Activated CD4-positive, alpha-beta memory T cell treated with anti-CD3 and anti-CD28 coated beads for 36 hours (primary cell): ENCODE measurements at regions of chr20 and their contacts with region 1.

Region 1: DNA sequence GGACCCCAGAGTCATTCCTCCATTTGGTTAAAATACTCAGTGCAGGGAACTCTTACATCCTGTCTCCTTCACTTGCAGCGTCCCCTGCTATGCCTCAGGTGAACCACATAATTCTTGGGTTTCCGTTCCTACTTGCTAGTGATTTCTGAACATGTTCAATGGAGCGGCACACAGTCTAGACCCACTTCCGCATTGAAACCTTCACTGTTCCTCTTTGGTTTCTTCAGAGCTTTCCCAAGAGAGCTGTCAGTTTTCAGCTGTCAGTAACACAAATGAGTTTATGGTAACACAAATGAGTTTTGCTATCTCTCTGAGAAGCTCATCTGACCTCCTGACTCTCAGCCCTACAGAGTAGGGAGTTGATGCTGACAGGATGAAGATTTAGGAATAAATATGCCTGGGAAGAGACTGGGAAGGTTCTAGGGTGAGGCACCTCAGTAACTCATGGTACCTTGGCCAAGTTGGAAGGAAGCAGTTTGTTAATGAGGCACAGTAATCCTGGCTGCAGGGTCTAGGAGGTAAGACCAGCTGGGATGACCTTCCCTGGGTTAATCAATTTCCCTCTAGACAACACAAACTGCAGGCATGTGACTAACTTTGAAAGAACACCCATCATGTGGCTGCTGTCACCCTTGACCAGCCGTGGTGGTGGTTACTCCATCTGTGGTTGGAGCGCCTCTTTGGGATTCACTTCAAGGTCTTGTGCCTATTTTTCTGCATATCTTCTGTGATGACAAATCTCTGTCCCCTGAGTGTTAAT is 5.4 kb downstream of the SYS1 start:
- DNase-seq: peak; percentile 66
- H3K4me3 Mint-ChIP-seq: no peak overlapping the region
- H3K27ac Mint-ChIP-seq: peak overlapping the region; percentile 44
- H3K4me1 Mint-ChIP-seq: peaks cover 59% of the 10 kb centered on the region
- H3K27me3 Mint-ChIP-seq: no peaks in the 10 kb centered on the region

Region 2: GRCh38 chr20:45450097-45450818 is 81.9 kb after region 1 on chr20:
- CTCF ChIA-PET with region 1: interaction called, 69 read pairs
- POLR2A ChIA-PET with region 1: no interaction called
- intact Hi-C with region 1: no loop called
- DNase-seq: no peak
- H3K4me3 Mint-ChIP-seq: no peak overlapping the region
- H3K27ac Mint-ChIP-seq: no peak overlapping the region
- H3K4me1 Mint-ChIP-seq: no peaks in the 10 kb centered on the region
- H3K27me3 Mint-ChIP-seq: peaks cover 3% of the 10 kb centered on the region

Region 3: GRCh38 chr20:45538209-45538799 is 169.9 kb after region 1 on chr20:
- CTCF ChIA-PET with region 1: no interaction called
- POLR2A ChIA-PET with region 1: no interaction called
- intact Hi-C with region 1: no loop called
- DNase-seq: no peak
- H3K4me3 Mint-ChIP-seq: no peak overlapping the region
- H3K27ac Mint-ChIP-seq: no peak overlapping the region
- H3K4me1 Mint-ChIP-seq: no peaks in the 10 kb centered on the region
- H3K27me3 Mint-ChIP-seq: peaks cover 24% of the 10 kb centered on the region